ENCODE measurements at regions of chr2 and their contacts with region 1.

Region 1: GRCh38 chr2:232511336-232511888 is 8.8 kb upstream of the PRSS56 start:
- DNase-seq: peak in 1 of 2 donors; percentile 38
- ATAC-seq: no peak
- H3K4me3 ChIP-seq: no peak overlapping the region
- H3K27ac ChIP-seq: no peak overlapping the region
- H3K4me1 ChIP-seq: peaks cover 26 to 27% of the 10 kb centered on the region in 2 donors
- H3K27me3 ChIP-seq: no peaks in the 10 kb centered on the region
- CTCF ChIP-seq: no peak
- POLR2A ChIP-seq: no peak

Region 2: DNA sequence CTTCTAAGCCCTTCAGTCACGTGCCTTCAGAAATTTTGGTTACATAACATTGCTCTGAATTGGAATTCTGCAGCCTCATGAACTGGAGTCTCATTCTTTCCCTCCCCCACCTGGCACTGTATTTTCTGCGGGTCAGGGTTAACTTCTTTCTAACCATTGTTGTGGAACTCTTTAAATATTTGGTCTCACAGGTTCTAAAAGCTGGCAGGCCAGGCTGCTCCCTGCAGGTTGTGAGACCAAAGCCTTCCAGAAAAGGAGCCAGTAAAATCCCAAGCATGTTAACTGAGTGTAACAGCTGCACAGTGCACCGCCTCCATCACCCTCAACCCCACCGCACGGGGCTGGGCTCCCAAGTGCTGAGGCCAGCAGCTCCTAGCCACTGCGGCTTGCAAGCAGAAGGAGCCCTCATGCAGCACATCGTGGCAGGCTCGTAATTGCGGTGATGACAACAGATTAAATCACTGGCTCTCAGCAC is 306.9 kb before region 1 on chr2:
- in situ Hi-C with region 1: no loop called
- intact Hi-C with region 1: no loop called
- DNase-seq: peak in 1 of 2 donors; percentile 49
- ATAC-seq: peak; percentile 33 to 88
- H3K4me3 ChIP-seq: no peak overlapping the region
- H3K27ac ChIP-seq: peak overlapping the region in 1 of 4 donors; percentile 47
- H3K4me1 ChIP-seq: peaks cover 17% of the 10 kb centered on the region in 2 donors
- H3K27me3 ChIP-seq: no peaks in the 10 kb centered on the region
- CTCF ChIP-seq: no peak
- POLR2A ChIP-seq: no peak

Region 3: DNA sequence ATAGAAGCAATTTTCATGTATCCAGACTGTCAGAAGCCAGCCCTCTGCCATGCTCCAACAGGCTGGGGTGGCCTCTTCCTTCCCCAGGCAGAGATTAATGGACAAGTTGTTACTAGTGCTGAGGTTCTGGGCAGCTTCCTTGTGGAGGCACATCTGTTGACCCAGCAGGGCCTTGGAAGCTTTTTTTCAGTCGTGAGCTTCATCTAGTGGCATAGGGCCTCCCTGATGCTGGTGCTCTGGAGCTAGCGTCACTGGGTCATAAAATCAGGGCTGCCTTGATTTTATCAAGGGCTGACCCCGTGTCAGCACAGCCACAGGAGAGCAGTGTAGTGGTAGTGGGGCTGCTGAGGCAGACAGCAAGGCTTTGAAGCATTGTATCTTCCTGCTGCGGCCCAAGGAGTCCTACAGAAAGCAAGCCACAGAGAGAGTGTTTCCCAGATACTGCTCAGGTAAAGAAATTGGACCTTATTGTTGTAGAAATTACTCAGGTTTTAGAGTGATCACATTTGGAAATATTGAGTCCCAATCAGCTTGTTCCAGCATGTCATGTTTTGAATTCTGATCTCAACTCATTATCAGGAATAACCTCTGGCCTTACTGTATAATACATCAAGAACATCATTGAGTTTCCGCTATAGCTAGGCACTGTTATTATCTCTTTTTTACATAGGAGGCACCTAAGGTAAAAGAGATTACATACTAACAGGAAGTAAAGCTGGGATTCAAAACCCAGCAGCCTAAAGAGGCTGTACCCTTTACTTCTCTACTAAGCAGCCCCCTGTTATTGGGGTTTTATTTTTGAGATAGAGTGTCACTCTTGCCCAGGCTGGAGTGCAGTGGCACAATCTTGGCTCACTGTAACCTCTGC is 225.2 kb before region 1 on chr2:
- in situ Hi-C with region 1: no loop called
- intact Hi-C with region 1: no loop called
- DNase-seq: no peak
- ATAC-seq: no peak
- H3K4me3 ChIP-seq: no peak overlapping the region
- H3K27ac ChIP-seq: no peak overlapping the region
- H3K4me1 ChIP-seq: no peaks in the 10 kb centered on the region
- H3K27me3 ChIP-seq: no peaks in the 10 kb centered on the region
- CTCF ChIP-seq: no peak
- POLR2A ChIP-seq: no peak

Region 4: DNA sequence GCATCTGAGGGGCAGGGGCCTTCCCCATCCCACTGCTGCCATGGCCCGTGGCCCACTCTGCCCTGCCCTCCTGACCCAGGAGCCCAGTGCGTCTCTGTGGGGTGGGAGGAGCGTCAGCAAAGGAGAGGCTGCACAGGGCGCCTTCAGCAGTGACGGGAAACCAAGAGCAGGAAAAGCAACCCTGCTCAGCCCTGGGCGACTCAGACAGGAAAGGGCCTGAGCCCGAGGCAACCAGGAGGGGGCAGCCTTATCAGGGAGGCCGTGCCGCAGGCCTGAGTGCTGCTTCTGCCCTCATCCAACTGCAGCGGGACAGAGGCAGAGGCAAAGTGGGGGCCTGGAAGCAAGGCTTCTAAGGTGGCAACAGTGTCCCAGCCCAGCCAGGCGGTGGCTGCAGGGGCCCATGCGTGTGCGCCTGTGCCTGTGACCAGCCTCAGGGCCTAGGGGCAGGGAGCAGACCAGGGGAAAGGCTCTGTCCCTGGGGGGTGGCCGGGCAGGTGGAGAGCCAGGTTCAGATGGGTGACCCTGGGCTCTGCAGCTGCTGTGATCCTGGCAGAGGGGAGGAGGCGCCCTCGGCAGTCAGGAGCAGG is 78.7 kb before region 1 on chr2:
- in situ Hi-C with region 1: no loop called
- intact Hi-C with region 1: no loop called
- DNase-seq: no peak
- ATAC-seq: no peak
- H3K4me3 ChIP-seq: no peak overlapping the region
- H3K27ac ChIP-seq: no peak overlapping the region
- H3K4me1 ChIP-seq: no peaks in the 10 kb centered on the region
- H3K27me3 ChIP-seq: no peaks in the 10 kb centered on the region
- CTCF ChIP-seq: no peak
- POLR2A ChIP-seq: no peak

Region 5: GRCh38 chr2:232455426-232456255 is 55.8 kb before region 1 on chr2 and contains the start of gene ALPI:
- in situ Hi-C with region 1: loop called in 1 of 4 experiments (anchors 10 kb)
- intact Hi-C with region 1: no loop called
- DNase-seq: no peak
- ATAC-seq: no peak
- H3K4me3 ChIP-seq: no peak within 1 kb of the TSS
- H3K27ac ChIP-seq: no peak within 1 kb of the TSS
- H3K4me1 ChIP-seq: no peaks in the 10 kb centered on the region
- H3K27me3 ChIP-seq: peaks cover 0 to 13% (median 0%) of the 10 kb centered on the region in 3 donors
- CTCF ChIP-seq: no peak
- POLR2A ChIP-seq: no peak
- total RNA-seq, gene ALPI: not detected